Activated B cell treated with CpG ODN at 0.5 μM for 24 hours (primary cell): ENCODE measurements at regions of chr1 and their contacts with region 1.

Region 1: DNA sequence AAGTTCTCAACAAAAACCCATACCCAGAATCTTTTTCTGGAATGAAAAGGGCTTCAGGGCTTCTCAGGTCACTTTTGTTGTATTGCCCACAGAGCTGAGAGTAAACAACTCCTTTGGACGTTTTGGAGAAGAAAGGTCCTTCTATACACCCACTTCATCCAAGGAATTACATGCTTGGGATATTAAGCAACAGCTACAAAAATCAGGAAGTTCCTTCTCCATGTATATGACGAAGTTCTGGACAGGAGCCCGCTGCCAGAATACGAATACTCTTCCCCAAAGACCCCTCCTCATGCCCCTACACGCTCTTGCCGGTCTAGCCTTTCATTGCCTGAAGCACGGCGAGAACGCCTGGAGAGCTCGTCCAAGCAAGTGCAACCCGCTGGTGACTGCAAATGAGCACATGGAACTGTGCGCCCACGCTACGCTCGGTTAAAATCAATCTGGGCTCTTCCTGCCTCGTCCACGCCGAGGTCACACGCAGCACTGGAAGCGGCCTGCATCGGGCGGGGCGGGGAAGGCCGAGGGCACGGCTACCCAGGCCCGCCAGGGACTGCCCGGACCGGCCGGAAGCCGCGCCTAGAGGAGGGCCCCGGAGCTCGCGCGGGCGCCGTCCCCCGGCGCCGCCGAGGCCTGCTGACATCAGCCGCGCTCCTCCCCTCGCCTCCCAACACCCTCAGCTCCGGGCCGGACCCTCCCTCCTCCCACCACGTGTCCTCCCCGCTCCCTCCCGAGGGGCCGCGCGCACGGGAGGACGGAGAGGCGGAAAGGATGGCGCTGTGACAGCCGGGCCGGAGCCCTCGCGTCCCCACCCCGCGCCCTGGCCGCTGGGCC is at the start of gene POGK:
- DNase-seq: peak; percentile 84
- ATAC-seq: peak; percentile 94
- H3K4me3 Mint-ChIP-seq: peak within 1 kb of the TSS; percentile 92
- H3K27ac Mint-ChIP-seq: peak within 1 kb of the TSS; percentile 96
- H3K4me1 Mint-ChIP-seq: peaks cover 29% of the 10 kb centered on the region
- H3K27me3 Mint-ChIP-seq: peaks cover 2% of the 10 kb centered on the region
- CTCF ChIP-seq: no peak
- total RNA-seq, gene POGK: 37.8 and 39.1 TPM in 2 replicates

Region 2: GRCh38 chr1:165630629-165631341 is 1208.2 kb before region 1 on chr1 and contains the start of gene MGST3:
- CTCF ChIA-PET with region 1: no interaction called
- POLR2A ChIA-PET with region 1: no interaction called
- intact Hi-C with region 1: loop called (anchors 2 kb)
- DNase-seq: peak; percentile 84
- ATAC-seq: peak; percentile 93
- H3K4me3 Mint-ChIP-seq: no peak within 1 kb of the TSS
- H3K27ac Mint-ChIP-seq: no peak within 1 kb of the TSS
- H3K4me1 Mint-ChIP-seq: peaks cover 33% of the 10 kb centered on the region
- H3K27me3 Mint-ChIP-seq: no peaks in the 10 kb centered on the region
- CTCF ChIP-seq: no peak
- total RNA-seq, gene MGST3: 31.3 and 33.4 TPM in 2 replicates

Region 3: GRCh38 chr1:165697881-165698760 is 1140.9 kb before region 1 on chr1 and contains the start of gene ALDH9A1:
- CTCF ChIA-PET with region 1: no interaction called
- POLR2A ChIA-PET with region 1: no interaction called
- intact Hi-C with region 1: loop called (anchors 2 kb)
- DNase-seq: peak; percentile 86
- ATAC-seq: peak; percentile 93
- H3K4me3 Mint-ChIP-seq: peak within 1 kb of the TSS; percentile 91
- H3K27ac Mint-ChIP-seq: peak within 1 kb of the TSS; percentile 91
- H3K4me1 Mint-ChIP-seq: peaks cover 27% of the 10 kb centered on the region
- H3K27me3 Mint-ChIP-seq: peaks cover 4% of the 10 kb centered on the region
- CTCF ChIP-seq: no peak
- total RNA-seq, gene ALDH9A1: 30.3 and 35.8 TPM in 2 replicates

Region 4: DNA sequence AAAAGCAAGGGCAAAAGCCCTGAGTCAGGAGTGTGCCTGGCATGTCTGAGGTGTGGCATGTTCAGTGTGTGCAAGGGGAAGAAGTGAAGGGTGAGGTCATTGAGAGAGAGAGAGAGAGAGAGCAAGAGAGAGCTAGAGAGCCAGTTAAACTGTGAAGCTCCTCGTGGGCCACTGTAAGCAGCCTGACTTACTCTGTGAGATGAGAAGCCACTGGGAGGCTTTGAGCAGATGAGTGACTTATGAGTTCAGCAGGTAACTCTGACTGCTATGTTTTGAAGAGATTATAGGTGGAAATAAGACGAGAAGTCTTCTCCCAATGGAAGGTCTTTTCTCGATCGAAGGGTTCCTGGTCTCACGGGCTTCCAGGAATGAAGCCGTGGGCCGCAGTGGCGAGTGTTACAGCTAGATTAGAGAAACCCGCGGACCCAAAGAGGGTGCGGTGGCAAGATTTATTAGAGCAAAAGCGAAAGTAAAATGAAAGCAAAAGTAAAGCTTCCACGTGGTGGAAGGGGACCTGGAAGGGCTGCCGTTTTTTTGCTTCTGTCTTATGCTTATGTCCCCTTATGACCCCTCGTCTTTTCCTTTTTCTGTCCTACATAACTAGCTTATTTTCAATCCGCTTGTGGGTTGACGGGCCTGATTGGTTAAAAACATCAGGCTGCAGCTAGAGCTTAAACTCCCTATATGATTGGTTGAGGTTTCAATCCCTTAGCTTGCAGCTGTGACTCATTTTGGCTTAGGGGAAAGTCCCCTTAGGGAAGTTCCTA is 349.1 kb before region 1 on chr1:
- CTCF ChIA-PET with region 1: no interaction called
- POLR2A ChIA-PET with region 1: interaction called, 15 read pairs
- intact Hi-C with region 1: loop called (anchors 5 kb)
- DNase-seq: peak; percentile 34
- ATAC-seq: peak; percentile 77
- H3K4me3 Mint-ChIP-seq: no peak overlapping the region
- H3K27ac Mint-ChIP-seq: no peak overlapping the region
- H3K4me1 Mint-ChIP-seq: peaks cover 6% of the 10 kb centered on the region
- H3K27me3 Mint-ChIP-seq: peaks cover 3% of the 10 kb centered on the region
- CTCF ChIP-seq: no peak

Region 5: GRCh38 chr1:166763318-166763717 is 75.7 kb before region 1 on chr1:
- CTCF ChIA-PET with region 1: no interaction called
- POLR2A ChIA-PET with region 1: no interaction called
- intact Hi-C with region 1: no loop called
- DNase-seq: no peak
- ATAC-seq: no peak
- H3K4me3 Mint-ChIP-seq: no peak overlapping the region
- H3K27ac Mint-ChIP-seq: no peak overlapping the region
- H3K4me1 Mint-ChIP-seq: no peaks in the 10 kb centered on the region
- H3K27me3 Mint-ChIP-seq: no peaks in the 10 kb centered on the region
- CTCF ChIP-seq: no peak

Region 6: DNA sequence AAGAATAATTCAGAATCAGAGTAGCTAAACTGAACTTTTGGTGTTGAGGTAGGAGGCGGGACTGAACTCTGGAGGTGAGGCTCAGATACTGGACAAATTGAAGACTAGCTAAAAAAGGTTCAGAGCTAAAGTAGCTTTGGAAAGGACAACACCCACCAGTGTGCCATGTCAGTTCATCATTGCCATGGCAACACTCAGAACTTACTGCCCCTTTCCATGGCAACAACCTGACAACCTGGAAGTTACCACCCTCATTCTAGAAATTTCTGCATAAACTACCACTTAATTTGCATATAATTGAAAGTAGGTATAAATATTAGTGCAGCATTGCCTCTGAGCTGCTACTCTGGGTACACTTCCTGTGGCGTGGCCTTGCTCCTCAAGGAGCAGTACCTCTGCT is 30.0 kb before region 1 on chr1:
- CTCF ChIA-PET with region 1: no interaction called
- POLR2A ChIA-PET with region 1: no interaction called
- intact Hi-C with region 1: no loop called
- DNase-seq: no peak
- ATAC-seq: no peak
- H3K4me3 Mint-ChIP-seq: no peak overlapping the region
- H3K27ac Mint-ChIP-seq: no peak overlapping the region
- H3K4me1 Mint-ChIP-seq: no peaks in the 10 kb centered on the region
- H3K27me3 Mint-ChIP-seq: peaks cover 14% of the 10 kb centered on the region
- CTCF ChIP-seq: no peak

Region 7: DNA sequence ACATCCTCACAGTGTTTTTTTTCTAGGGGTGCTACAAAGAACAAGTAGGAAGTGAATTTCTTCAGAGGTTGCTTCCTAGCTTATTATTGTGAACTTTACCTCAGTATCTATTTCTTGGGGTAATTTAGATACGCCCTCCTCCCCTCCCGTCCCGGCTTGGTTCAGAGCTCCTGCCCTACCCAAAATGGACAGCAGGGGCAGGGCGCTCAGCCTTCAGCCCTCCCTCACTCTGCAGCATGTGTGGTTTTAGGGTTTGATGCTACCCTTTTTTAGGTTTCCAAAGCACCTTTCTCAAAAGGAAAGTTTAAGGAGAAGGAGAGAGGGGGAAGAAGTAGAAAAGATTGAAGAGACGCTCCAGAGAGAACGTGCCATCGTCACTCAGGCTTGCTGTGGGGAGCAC is 16.6 kb before region 1 on chr1:
- CTCF ChIA-PET with region 1: no interaction called
- POLR2A ChIA-PET with region 1: no interaction called
- intact Hi-C with region 1: no loop called
- DNase-seq: no peak
- ATAC-seq: no peak
- H3K4me3 Mint-ChIP-seq: no peak overlapping the region
- H3K27ac Mint-ChIP-seq: no peak overlapping the region
- H3K4me1 Mint-ChIP-seq: no peaks in the 10 kb centered on the region
- H3K27me3 Mint-ChIP-seq: peaks cover 10% of the 10 kb centered on the region
- CTCF ChIP-seq: no peak

Region 8: DNA sequence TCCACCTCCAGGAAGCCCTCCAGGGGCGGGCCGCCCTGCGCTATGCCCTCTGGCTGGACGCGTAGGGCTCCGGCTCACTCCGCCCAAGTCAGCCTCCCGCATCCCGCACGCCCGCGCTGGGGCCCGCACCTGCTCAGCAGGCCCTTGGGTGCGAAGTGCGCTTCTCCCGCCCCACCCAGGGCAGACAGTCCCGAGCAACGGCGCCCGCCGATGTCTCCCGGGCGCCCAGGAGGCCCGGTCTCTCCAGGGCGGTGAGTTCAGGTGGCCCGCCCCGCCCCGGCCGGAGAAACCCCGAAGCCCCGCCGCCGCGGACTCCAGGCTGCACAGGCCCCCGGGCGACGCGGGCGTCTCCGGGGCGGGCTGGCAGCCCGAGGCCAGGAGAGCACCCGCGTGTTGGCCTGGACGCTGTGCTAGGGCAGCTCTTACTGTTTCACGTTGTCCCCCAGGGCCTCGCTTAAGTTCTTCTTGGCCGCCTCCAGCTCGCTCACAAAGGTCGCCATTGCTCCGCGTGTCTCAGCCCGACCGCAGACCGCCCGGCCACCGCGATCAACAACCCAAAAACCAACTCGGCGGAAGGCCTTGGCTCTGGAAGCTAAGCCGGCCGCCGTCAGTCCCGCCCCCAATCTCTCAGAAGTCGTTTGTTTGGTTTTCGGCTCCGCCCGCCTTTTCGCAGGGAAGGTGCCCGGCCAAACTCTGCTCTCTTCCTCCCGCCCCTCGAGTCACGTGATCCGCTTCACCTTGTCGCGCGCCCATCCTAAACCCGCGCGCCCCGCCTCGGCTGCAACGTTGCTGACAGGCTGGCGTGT is 37.0 kb after region 1 on chr1 and contains the start of gene TADA1:
- CTCF ChIA-PET with region 1: no interaction called
- POLR2A ChIA-PET with region 1: interaction called, 31 read pairs
- intact Hi-C with region 1: loop called (anchors 1 kb)
- DNase-seq: peak; percentile 94
- ATAC-seq: peak; percentile 93
- H3K4me3 Mint-ChIP-seq: peak within 1 kb of the TSS; percentile 96
- H3K27ac Mint-ChIP-seq: peak within 1 kb of the TSS; percentile 98
- H3K4me1 Mint-ChIP-seq: peaks cover 30% of the 10 kb centered on the region
- H3K27me3 Mint-ChIP-seq: no peaks in the 10 kb centered on the region
- CTCF ChIP-seq: no peak
- total RNA-seq, gene TADA1: 13.6 and 15.3 TPM in 2 replicates